CD4-positive, alpha-beta memory T cell (primary cell): ENCODE measurements at regions of chr4 and their contacts with region 1.

Region 1: GRCh38 chr4:57163530-57164459 is 53.6 kb upstream of the IGFBP7 start:
- DNase-seq: peak; percentile 41 to 61 (median 56)
- H3K4me3 ChIP-seq: peak overlapping the region; percentile 76 to 87
- H3K4me3 Mint-ChIP-seq: peak overlapping the region; percentile 77 to 93 (median 90)
- H3K27ac ChIP-seq: no peak overlapping the region
- H3K27ac Mint-ChIP-seq: peak overlapping the region in 4 of 7 donors; percentile 15 to 74 (median 52)
- H3K4me1 ChIP-seq: peaks cover 4% of the 10 kb centered on the region
- H3K4me1 Mint-ChIP-seq: peaks cover 6 to 16% (median 9%) of the 10 kb centered on the region in 4 donors
- H3K27me3 ChIP-seq: no peaks in the 10 kb centered on the region
- H3K27me3 Mint-ChIP-seq: peaks cover 16 to 18% of the 10 kb centered on the region in 2 donors

Region 2: DNA sequence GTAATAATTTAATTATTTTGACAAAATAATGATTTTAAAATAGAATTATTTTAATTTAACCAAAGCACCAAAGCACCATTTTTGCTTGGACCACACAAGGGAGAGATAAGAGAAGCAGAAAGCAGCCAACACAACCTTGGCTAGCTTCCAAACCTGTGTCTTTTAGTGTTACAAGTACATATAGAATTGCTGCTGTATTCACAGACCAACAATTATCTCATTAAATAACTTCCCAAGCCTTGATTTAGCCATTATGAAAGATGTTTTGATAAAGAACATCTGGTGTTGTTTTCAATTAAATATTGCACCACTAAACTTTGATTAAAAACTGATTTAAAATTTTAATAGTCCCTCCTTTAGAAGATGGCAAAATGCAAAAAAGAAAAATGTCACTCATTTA is 39.6 kb before region 1 on chr4:
- CTCF ChIA-PET with region 1: no interaction called
- POLR2A ChIA-PET with region 1: no interaction called
- intact Hi-C with region 1: no loop called
- DNase-seq: no peak
- H3K4me3 ChIP-seq: no peak overlapping the region
- H3K4me3 Mint-ChIP-seq: no peak overlapping the region
- H3K27ac ChIP-seq: no peak overlapping the region
- H3K27ac Mint-ChIP-seq: no peak overlapping the region
- H3K4me1 ChIP-seq: no peaks in the 10 kb centered on the region
- H3K4me1 Mint-ChIP-seq: no peaks in the 10 kb centered on the region
- H3K27me3 ChIP-seq: no peaks in the 10 kb centered on the region
- H3K27me3 Mint-ChIP-seq: peaks cover 11 to 12% of the 10 kb centered on the region in 2 donors

Region 3: DNA sequence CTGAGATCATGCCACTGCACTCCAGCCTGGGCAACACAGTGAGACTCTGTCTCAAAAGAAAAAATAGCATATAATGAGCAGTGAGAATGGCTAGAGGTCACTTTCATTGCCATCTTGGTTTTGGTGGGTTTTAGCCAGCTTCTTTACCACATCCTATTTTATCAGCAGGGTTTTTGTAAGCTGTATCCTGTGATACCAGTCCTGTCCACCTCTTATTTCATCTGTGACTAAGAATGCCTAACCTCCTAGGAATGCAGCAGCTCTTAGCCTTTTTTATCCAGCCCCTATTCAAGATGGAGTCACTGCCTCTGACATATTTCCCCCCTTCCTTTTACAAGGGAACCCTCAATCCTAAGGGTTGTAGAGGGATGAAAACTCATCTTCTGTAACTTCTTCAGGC is 27.5 kb before region 1 on chr4:
- CTCF ChIA-PET with region 1: interaction called, 12 read pairs
- POLR2A ChIA-PET with region 1: no interaction called
- intact Hi-C with region 1: no loop called
- DNase-seq: no peak
- H3K4me3 ChIP-seq: no peak overlapping the region
- H3K4me3 Mint-ChIP-seq: no peak overlapping the region
- H3K27ac ChIP-seq: no peak overlapping the region
- H3K27ac Mint-ChIP-seq: no peak overlapping the region
- H3K4me1 ChIP-seq: no peaks in the 10 kb centered on the region
- H3K4me1 Mint-ChIP-seq: no peaks in the 10 kb centered on the region
- H3K27me3 ChIP-seq: no peaks in the 10 kb centered on the region
- H3K27me3 Mint-ChIP-seq: peaks cover 4 to 8% of the 10 kb centered on the region in 2 donors

Region 4: GRCh38 chr4:57147335-57148060 is 16.3 kb before region 1 on chr4:
- CTCF ChIA-PET with region 1: interaction called, 30 read pairs
- POLR2A ChIA-PET with region 1: no interaction called
- intact Hi-C with region 1: no loop called
- DNase-seq: no peak
- H3K4me3 ChIP-seq: no peak overlapping the region
- H3K4me3 Mint-ChIP-seq: no peak overlapping the region
- H3K27ac ChIP-seq: no peak overlapping the region
- H3K27ac Mint-ChIP-seq: no peak overlapping the region
- H3K4me1 ChIP-seq: no peaks in the 10 kb centered on the region
- H3K4me1 Mint-ChIP-seq: no peaks in the 10 kb centered on the region
- H3K27me3 ChIP-seq: no peaks in the 10 kb centered on the region
- H3K27me3 Mint-ChIP-seq: peaks cover 5 to 8% of the 10 kb centered on the region in 2 donors

Region 5: GRCh38 chr4:57182132-57182874 is 18.5 kb after region 1 on chr4:
- CTCF ChIA-PET with region 1: interaction called, 43 read pairs
- POLR2A ChIA-PET with region 1: no interaction called
- intact Hi-C with region 1: no loop called
- DNase-seq: no peak
- H3K4me3 ChIP-seq: no peak overlapping the region
- H3K4me3 Mint-ChIP-seq: no peak overlapping the region
- H3K27ac ChIP-seq: no peak overlapping the region
- H3K27ac Mint-ChIP-seq: no peak overlapping the region
- H3K4me1 ChIP-seq: no peaks in the 10 kb centered on the region
- H3K4me1 Mint-ChIP-seq: no peaks in the 10 kb centered on the region
- H3K27me3 ChIP-seq: no peaks in the 10 kb centered on the region
- H3K27me3 Mint-ChIP-seq: peaks cover 0 to 1% of the 10 kb centered on the region in 2 donors

Region 6: DNA sequence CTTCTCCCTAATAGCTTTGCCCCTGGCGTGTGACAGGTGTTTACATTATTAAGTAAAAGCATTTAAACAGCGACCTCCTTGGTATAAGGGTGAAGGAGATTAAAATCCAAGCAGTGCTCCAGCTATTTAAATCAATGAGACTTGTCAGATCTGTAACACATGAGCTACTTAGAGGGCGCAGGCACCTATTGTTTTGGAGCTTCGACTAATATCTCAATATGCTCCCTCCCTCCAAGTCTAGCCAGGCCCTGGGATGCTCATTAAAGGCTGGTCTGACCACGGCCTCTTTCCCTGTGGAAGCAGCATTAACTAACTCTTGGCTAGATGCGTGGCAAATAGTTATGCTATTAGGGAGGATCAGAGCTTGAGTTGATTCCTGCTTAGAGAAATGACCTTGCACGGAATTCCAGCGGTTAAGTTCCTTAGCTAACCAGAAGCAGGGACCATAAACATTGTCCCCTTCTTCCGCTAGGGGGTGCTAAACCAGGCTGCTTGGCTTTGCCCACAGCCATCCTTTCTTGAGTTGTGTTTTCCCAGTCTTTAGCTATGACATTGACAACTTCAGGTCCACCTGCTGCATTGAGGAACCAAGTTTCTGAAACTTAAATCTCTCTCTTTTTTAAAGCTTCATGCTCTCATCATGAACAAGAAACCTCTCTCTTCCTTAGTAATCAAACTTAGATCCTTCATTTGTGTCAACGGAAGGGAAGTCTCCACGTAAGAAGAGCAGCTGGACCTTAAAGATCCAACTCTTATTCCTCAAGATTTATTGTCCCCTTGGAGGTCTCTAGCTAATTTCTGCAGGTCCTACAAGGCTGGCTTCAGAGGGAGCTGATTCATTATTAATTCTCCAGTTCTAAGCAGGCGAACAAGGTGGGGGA is 27.0 kb after region 1 on chr4:
- CTCF ChIA-PET with region 1: interaction called, 25 read pairs
- POLR2A ChIA-PET with region 1: no interaction called
- intact Hi-C with region 1: no loop called
- DNase-seq: no peak
- H3K4me3 ChIP-seq: no peak overlapping the region
- H3K4me3 Mint-ChIP-seq: no peak overlapping the region
- H3K27ac ChIP-seq: no peak overlapping the region
- H3K27ac Mint-ChIP-seq: no peak overlapping the region
- H3K4me1 ChIP-seq: no peaks in the 10 kb centered on the region
- H3K4me1 Mint-ChIP-seq: peaks cover 0 to 2% (median under 1%) of the 10 kb centered on the region in 4 donors
- H3K27me3 ChIP-seq: no peaks in the 10 kb centered on the region
- H3K27me3 Mint-ChIP-seq: peaks cover 7 to 8% of the 10 kb centered on the region in 2 donors

Region 7: DNA sequence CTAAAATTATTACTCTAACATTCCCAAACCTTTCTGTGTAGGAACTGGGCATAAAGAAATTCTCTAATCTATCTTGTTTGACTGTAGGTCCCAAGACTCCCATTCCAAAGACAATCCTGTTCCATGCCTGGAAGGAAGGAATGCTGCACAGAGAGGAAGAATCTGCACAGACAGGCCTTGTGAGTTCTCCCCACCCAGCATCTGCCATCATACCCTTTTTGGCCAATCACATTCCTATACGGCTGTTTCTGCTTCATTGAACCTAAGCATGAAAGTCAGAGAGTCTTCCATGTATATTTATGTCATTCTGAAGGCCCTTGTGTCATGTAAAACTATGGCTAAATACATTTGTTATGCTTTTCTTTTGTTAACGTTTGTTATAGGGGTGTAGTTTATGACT is 614.1 kb after region 1 on chr4:
- CTCF ChIA-PET with region 1: no interaction called
- POLR2A ChIA-PET with region 1: no interaction called
- intact Hi-C with region 1: no loop called
- DNase-seq: no peak
- H3K4me3 ChIP-seq: no peak overlapping the region
- H3K4me3 Mint-ChIP-seq: no peak overlapping the region
- H3K27ac ChIP-seq: no peak overlapping the region
- H3K27ac Mint-ChIP-seq: no peak overlapping the region
- H3K4me1 ChIP-seq: no peaks in the 10 kb centered on the region
- H3K4me1 Mint-ChIP-seq: no peaks in the 10 kb centered on the region
- H3K27me3 ChIP-seq: no peaks in the 10 kb centered on the region
- H3K27me3 Mint-ChIP-seq: no peaks in the 10 kb centered on the region

Region 8: GRCh38 chr4:57981123-57981522 is 817.3 kb after region 1 on chr4:
- CTCF ChIA-PET with region 1: no interaction called
- POLR2A ChIA-PET with region 1: no interaction called
- intact Hi-C with region 1: no loop called
- DNase-seq: no peak
- H3K4me3 ChIP-seq: no peak overlapping the region
- H3K4me3 Mint-ChIP-seq: no peak overlapping the region
- H3K27ac ChIP-seq: no peak overlapping the region
- H3K27ac Mint-ChIP-seq: no peak overlapping the region
- H3K4me1 ChIP-seq: no peaks in the 10 kb centered on the region
- H3K4me1 Mint-ChIP-seq: no peaks in the 10 kb centered on the region
- H3K27me3 ChIP-seq: no peaks in the 10 kb centered on the region
- H3K27me3 Mint-ChIP-seq: no peaks in the 10 kb centered on the region